B cell (primary cell): ENCODE measurements at regions of chr2 and their contacts with region 1.

Region 1: GRCh38 chr2:100984892-100985379 is 17.2 kb upstream of the RPL31 start:
- DNase-seq: peak; percentile 83
- ATAC-seq: peak; percentile 81
- H3K4me3 ChIP-seq: no peak overlapping the region
- H3K4me3 Mint-ChIP-seq: no peak overlapping the region
- H3K27ac ChIP-seq: no peak overlapping the region
- H3K27ac Mint-ChIP-seq: no peak overlapping the region
- H3K4me1 ChIP-seq: no peaks in the 10 kb centered on the region
- H3K4me1 Mint-ChIP-seq: no peaks in the 10 kb centered on the region
- H3K27me3 ChIP-seq: peaks cover 0 to 4% (median 3%) of the 10 kb centered on the region in 4 experiments
- H3K27me3 Mint-ChIP-seq: peaks cover 13% of the 10 kb centered on the region
- CTCF ChIP-seq: peak; percentile 93

Region 2: GRCh38 chr2:100281521-100282438 is 703.2 kb before region 1 on chr2:
- CTCF ChIA-PET with region 1: no interaction called
- POLR2A ChIA-PET with region 1: no interaction called
- intact Hi-C with region 1: no loop called
- DNase-seq: no peak
- ATAC-seq: no peak
- H3K4me3 ChIP-seq: no peak overlapping the region
- H3K4me3 Mint-ChIP-seq: no peak overlapping the region
- H3K27ac ChIP-seq: no peak overlapping the region
- H3K27ac Mint-ChIP-seq: no peak overlapping the region
- H3K4me1 ChIP-seq: no peaks in the 10 kb centered on the region
- H3K4me1 Mint-ChIP-seq: no peaks in the 10 kb centered on the region
- H3K27me3 ChIP-seq: peaks cover 0 to 14% (median 2%) of the 10 kb centered on the region in 4 experiments
- H3K27me3 Mint-ChIP-seq: peaks cover 43% of the 10 kb centered on the region
- CTCF ChIP-seq: no peak

Region 3: GRCh38 chr2:100610381-100610831 is 374.5 kb before region 1 on chr2:
- CTCF ChIA-PET with region 1: interaction called, 88 read pairs
- POLR2A ChIA-PET with region 1: no interaction called
- intact Hi-C with region 1: loop called (anchors 1 kb)
- DNase-seq: peak; percentile 44
- ATAC-seq: no peak
- H3K4me3 ChIP-seq: no peak overlapping the region
- H3K4me3 Mint-ChIP-seq: no peak overlapping the region
- H3K27ac ChIP-seq: no peak overlapping the region
- H3K27ac Mint-ChIP-seq: no peak overlapping the region
- H3K4me1 ChIP-seq: no peaks in the 10 kb centered on the region
- H3K4me1 Mint-ChIP-seq: peaks cover 1% of the 10 kb centered on the region
- H3K27me3 ChIP-seq: peaks cover 0 to 5% (median 0%) of the 10 kb centered on the region in 4 experiments
- H3K27me3 Mint-ChIP-seq: peaks cover 29% of the 10 kb centered on the region
- CTCF ChIP-seq: peak; percentile 53

Region 4: GRCh38 chr2:100730346-100730745 is 254.6 kb before region 1 on chr2:
- CTCF ChIA-PET with region 1: interaction called, 6 read pairs
- POLR2A ChIA-PET with region 1: no interaction called
- intact Hi-C with region 1: loop called (anchors 1 kb)
- DNase-seq: no peak
- ATAC-seq: no peak
- H3K4me3 ChIP-seq: no peak overlapping the region
- H3K4me3 Mint-ChIP-seq: no peak overlapping the region
- H3K27ac ChIP-seq: no peak overlapping the region
- H3K27ac Mint-ChIP-seq: no peak overlapping the region
- H3K4me1 ChIP-seq: no peaks in the 10 kb centered on the region
- H3K4me1 Mint-ChIP-seq: no peaks in the 10 kb centered on the region
- H3K27me3 ChIP-seq: peaks cover 0 to 6% (median 3%) of the 10 kb centered on the region in 4 experiments
- H3K27me3 Mint-ChIP-seq: peaks cover 63% of the 10 kb centered on the region
- CTCF ChIP-seq: no peak

Region 5: GRCh38 chr2:100882645-100883613 is 102.0 kb before region 1 on chr2:
- CTCF ChIA-PET with region 1: no interaction called
- POLR2A ChIA-PET with region 1: no interaction called
- intact Hi-C with region 1: no loop called
- DNase-seq: no peak
- ATAC-seq: no peak
- H3K4me3 ChIP-seq: no peak overlapping the region
- H3K4me3 Mint-ChIP-seq: no peak overlapping the region
- H3K27ac ChIP-seq: no peak overlapping the region
- H3K27ac Mint-ChIP-seq: no peak overlapping the region
- H3K4me1 ChIP-seq: no peaks in the 10 kb centered on the region
- H3K4me1 Mint-ChIP-seq: no peaks in the 10 kb centered on the region
- H3K27me3 ChIP-seq: no peaks in the 10 kb centered on the region
- H3K27me3 Mint-ChIP-seq: peaks cover 14% of the 10 kb centered on the region
- CTCF ChIP-seq: no peak

Region 6: GRCh38 chr2:101066242-101066641 is 81.3 kb after region 1 on chr2:
- CTCF ChIA-PET with region 1: no interaction called
- POLR2A ChIA-PET with region 1: no interaction called
- intact Hi-C with region 1: no loop called
- DNase-seq: no peak
- ATAC-seq: no peak
- H3K4me3 ChIP-seq: no peak overlapping the region
- H3K4me3 Mint-ChIP-seq: no peak overlapping the region
- H3K27ac ChIP-seq: no peak overlapping the region
- H3K27ac Mint-ChIP-seq: no peak overlapping the region
- H3K4me1 ChIP-seq: no peaks in the 10 kb centered on the region
- H3K4me1 Mint-ChIP-seq: no peaks in the 10 kb centered on the region
- H3K27me3 ChIP-seq: no peaks in the 10 kb centered on the region
- H3K27me3 Mint-ChIP-seq: no peaks in the 10 kb centered on the region
- CTCF ChIP-seq: no peak

Region 7: GRCh38 chr2:101252408-101253012 is 267.6 kb after region 1 on chr2 and contains the start of gene CNOT11:
- CTCF ChIA-PET with region 1: no interaction called
- POLR2A ChIA-PET with region 1: no interaction called
- intact Hi-C with region 1: no loop called
- DNase-seq: peak; percentile 99
- ATAC-seq: peak; percentile 85
- H3K4me3 ChIP-seq: peak within 1 kb of the TSS; percentile 68 to 91 (median 88)
- H3K4me3 Mint-ChIP-seq: peak within 1 kb of the TSS; percentile 95
- H3K27ac ChIP-seq: peak within 1 kb of the TSS; percentile 83 to 98
- H3K27ac Mint-ChIP-seq: peak within 1 kb of the TSS; percentile 92
- H3K4me1 ChIP-seq: peaks cover 20 to 30% of the 10 kb centered on the region in 2 donors
- H3K4me1 Mint-ChIP-seq: peaks cover 44% of the 10 kb centered on the region
- H3K27me3 ChIP-seq: no peaks in the 10 kb centered on the region
- H3K27me3 Mint-ChIP-seq: no peaks in the 10 kb centered on the region
- CTCF ChIP-seq: no peak
- total RNA-seq, gene CNOT11: 46.3 and 46.7 TPM in 2 replicates